ENCODE measurements at regions of chr4 and their contacts with region 1.

Region 1: DNA sequence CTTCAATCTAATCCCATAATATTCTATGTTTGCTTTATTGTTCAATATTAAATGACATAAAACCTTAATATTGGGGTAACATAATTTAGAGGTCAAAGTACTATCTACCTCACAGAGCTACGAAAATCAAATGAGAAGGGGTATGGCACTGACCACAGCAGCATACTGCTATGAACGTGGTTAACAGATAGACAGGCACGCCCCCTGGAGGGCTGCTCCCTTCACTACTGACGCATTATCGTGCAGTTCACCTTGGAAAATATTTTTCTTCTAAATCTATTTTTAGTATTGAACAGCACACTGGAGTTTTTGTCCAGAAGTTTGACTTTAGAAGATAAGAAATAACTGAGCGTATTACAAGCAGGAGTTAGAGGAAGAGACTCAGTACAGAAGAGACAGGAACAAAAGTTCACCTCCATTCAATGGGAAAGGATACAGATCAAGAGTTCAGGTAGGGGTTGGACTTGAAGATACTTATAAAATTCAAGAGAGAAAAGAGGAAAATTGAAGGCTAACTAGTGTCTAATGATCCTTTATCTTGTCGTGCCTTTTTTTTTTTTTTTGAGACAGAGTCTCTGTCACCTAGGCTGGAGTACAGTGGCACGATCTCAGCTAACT is 22.7 kb downstream of the MAP9 start:
- H3K4me3 Mint-ChIP-seq: no peak overlapping the region
- H3K27ac Mint-ChIP-seq: no peak overlapping the region
- H3K4me1 Mint-ChIP-seq: no peaks in the 10 kb centered on the region
- H3K27me3 Mint-ChIP-seq: no peaks in the 10 kb centered on the region

Region 2: DNA sequence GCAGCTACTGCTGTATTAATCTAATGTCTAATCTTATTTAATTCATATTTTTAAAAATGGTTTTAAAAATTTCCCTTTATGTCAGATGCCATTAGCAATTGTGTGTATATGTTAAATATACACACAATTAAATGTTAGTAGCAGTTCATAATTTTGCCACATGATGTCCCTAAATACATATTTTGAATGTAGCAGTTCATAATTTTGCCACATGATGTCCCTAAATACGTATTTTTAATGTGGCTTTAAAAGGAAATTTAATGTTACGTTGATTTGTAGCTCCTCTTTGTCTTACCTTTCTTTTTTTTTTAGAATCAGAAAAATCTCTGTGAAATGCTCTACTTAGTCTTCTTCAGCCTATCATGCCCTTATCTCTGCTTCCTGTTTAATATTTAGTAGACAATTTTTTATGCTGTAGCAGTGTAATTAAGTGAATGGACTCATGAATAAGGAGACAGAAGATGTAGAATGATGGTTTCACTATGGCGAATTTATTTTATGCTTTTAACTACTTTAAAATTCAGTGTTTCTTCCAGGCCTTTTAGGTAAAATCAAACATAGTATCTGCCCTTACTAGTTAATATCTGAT is 546.9 kb before region 1 on chr4:
- intact Hi-C with region 1: loop called (anchors 10 kb)
- H3K4me3 Mint-ChIP-seq: no peak overlapping the region
- H3K27ac Mint-ChIP-seq: no peak overlapping the region
- H3K4me1 Mint-ChIP-seq: no peaks in the 10 kb centered on the region
- H3K27me3 Mint-ChIP-seq: no peaks in the 10 kb centered on the region

Region 3: GRCh38 chr4:155079871-155080270 is 274.2 kb before region 1 on chr4:
- intact Hi-C with region 1: no loop called
- H3K4me3 Mint-ChIP-seq: no peak overlapping the region
- H3K27ac Mint-ChIP-seq: no peak overlapping the region
- H3K4me1 Mint-ChIP-seq: no peaks in the 10 kb centered on the region
- H3K27me3 Mint-ChIP-seq: no peaks in the 10 kb centered on the region